Motor neuron (in vitro differentiated cells): ENCODE measurements at regions of chr10 and their contacts with region 1.

Region 1: DNA sequence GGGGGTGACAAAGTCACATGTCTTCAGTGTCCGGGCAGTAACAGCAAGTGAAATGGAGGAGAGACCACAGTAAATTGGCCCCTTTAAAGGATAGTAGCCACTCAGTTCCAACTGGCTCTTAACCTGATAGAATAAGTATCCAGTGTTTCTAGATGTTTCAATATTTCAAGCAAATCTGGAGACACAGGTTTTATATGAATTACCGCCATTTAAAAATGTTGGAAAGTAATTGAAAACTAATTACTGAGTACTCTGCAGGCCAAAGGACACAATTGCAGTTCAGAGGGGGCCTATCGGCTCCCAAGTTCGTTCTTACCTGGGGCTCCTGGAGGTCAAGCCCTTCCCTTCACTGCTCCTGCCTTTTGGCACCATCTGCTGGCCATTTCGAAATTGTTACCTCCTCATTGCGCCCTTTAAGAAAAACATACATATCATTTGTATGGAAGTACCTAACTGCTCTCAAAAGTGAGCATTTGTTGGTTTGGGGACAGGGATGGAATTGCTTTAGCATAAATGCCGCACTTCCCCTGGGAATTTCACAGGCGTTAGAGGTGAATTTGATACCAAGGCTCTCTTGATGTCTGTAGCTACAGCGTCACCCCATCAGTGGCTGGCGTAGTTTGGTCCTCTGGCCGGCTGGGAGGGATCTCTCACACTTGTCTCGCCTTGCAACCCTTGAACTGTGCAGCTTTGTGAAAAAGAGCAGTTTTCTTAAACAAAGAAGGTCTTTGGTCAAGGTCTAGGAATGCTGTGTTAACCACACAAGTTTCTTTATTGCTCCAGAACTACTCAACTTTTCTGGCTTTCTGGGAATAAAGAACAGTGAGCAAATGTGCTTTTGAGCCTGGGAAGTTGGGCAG is 220.0 kb downstream of the ARHGAP21 start:
- ATAC-seq: peak in 4 of 8 experiments; percentile 37 to 75 (median 60)
- H3K4me3 ChIP-seq: no peak overlapping the region
- H3K27ac ChIP-seq: no peak overlapping the region
- H3K4me1 ChIP-seq: no peaks in the 10 kb centered on the region

Region 2: DNA sequence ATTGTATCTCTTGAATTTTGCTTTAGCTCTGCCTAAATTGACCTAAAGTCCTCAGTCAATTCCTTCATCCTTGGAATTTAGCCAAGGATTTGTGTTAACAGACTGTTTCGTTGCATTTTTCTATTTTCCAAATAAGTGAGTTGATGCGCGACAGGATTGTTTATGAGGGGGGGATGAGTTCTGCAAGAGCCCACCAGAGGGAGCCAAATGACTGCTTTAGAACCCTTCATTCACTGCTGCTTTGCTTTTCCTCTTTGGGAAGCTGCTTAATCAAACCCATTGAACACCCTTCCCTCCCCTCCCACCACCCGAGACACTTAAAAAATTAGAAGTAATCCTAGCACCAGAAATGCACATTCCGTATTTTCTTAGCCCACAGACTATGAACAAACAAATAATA is 1345.3 kb before region 1 on chr10:
- in situ Hi-C with region 1: loop called in 3 of 9 experiments (anchors 25 kb)
- ATAC-seq: peak; percentile 64 to 96 (median 83)
- H3K4me3 ChIP-seq: peak overlapping the region in 2 of 5 donors; percentile 5 to 8
- H3K27ac ChIP-seq: no peak overlapping the region
- H3K4me1 ChIP-seq: peaks cover 0 to 2% of the 10 kb centered on the region in 2 donors

Region 3: DNA sequence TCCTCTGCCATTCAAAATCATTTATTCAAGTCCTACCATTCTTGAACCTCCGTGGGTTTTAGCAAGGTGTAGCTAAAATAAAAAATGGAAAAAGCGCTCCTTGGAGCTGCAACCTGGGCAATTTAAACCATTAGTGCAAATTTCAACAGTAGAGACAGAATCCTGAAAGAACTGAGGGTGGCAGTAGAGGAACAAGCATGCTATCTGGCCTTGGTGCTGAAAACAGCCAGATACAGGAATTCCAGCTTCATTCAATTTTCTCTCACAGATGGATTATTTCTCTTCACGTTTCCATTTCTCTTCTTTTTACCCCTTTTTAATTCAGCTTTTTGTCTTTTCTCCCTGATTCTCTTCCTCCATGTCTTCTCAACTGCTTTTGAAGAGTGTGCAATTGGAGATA is 987.2 kb before region 1 on chr10:
- in situ Hi-C with region 1: loop called in 1 of 9 experiments (anchors 25 kb)
- ATAC-seq: peak in 6 of 8 experiments; percentile 50 to 69 (median 64)
- H3K4me3 ChIP-seq: no peak overlapping the region
- H3K27ac ChIP-seq: no peak overlapping the region
- H3K4me1 ChIP-seq: peaks cover 0 to 7% of the 10 kb centered on the region in 2 donors

Region 4: GRCh38 chr10:24008164-24009091 is 495.3 kb before region 1 on chr10:
- in situ Hi-C with region 1: loop called in 1 of 9 experiments (anchors 25 kb)
- ATAC-seq: peak; percentile 32 to 98 (median 88)
- H3K4me3 ChIP-seq: no peak overlapping the region
- H3K27ac ChIP-seq: no peak overlapping the region
- H3K4me1 ChIP-seq: peaks cover 14% of the 10 kb centered on the region in 2 donors

Region 5: DNA sequence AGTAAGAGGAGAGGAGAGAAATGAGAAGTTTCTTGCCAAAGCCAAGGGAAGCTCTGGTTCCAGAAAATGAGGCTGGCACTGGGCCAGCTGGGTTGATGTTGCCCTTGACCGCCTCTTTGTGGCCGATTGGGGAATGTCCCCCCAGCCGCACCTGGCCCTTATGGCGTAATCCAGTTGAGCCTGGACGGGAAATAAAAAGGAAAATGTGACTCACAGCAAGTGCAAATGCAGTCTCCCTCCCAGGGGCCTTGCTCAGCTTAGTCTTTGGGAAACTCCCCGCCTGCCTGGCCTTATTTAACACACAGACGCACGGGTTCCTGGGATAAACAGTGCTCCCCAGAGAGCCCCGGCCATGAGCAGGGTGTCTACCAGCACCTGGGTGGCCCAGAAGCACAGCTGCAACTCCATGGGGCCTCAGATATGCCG is 120.0 kb before region 1 on chr10:
- in situ Hi-C with region 1: loop called in 2 of 9 experiments (anchors 25 kb)
- ATAC-seq: peak; percentile 45 to 99 (median 97)
- H3K4me3 ChIP-seq: no peak overlapping the region
- H3K27ac ChIP-seq: no peak overlapping the region
- H3K4me1 ChIP-seq: peaks cover 0 to 7% of the 10 kb centered on the region in 2 donors

Region 6: DNA sequence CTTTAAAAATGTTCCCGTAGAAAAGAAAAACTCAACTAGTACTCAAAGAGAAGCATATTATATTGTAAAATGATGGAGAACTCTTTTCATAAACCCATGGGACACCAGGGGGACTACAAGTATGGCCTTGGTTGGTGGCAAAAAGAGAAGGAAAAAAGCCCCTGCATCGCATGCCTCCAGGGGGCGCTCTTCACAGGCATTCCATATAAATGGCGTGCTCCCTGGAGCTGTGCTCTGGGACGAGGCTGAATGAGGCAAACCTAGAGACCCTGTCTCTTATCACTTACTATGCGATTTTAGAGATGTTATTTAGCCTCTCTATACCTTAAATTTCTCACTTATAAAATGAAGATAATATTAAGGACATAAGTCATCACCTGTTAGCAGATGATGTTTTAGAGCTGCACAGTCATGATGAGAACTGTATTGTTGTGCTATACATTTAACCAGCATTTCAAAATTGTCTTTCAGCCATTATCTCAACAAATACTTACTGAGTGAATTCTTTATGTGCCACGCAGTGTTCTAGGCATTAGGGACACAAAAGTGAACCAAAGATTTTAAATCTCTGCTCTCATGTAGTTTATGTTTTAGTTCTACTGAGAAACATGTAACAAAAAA is 114.2 kb after region 1 on chr10:
- in situ Hi-C with region 1: no loop called
- ATAC-seq: peak in 6 of 8 experiments; percentile 22 to 68 (median 43)
- H3K4me3 ChIP-seq: no peak overlapping the region
- H3K27ac ChIP-seq: no peak overlapping the region
- H3K4me1 ChIP-seq: peaks cover 0 to 10% of the 10 kb centered on the region in 2 donors